MCF 10A (cell line): ENCODE measurements at regions of chr6 and their contacts with region 1.

Region 1: GRCh38 chr6:82040405-82041221 is 206.9 kb downstream of the IBTK start:
- DNase-seq: peak; percentile 71
- H3K4me3 Mint-ChIP-seq: no peak overlapping the region
- H3K27ac Mint-ChIP-seq: no peak overlapping the region
- H3K4me1 Mint-ChIP-seq: no peaks in the 10 kb centered on the region
- H3K27me3 Mint-ChIP-seq: no peaks in the 10 kb centered on the region
- CTCF ChIP-seq: peak; percentile 72

Region 2: GRCh38 chr6:82022601-82023102 is 18.0 kb before region 1 on chr6:
- CTCF ChIA-PET with region 1: interaction called, 21 read pairs
- POLR2A ChIA-PET with region 1: interaction called, 3 read pairs
- intact Hi-C with region 1: no loop called
- DNase-seq: peak; percentile 83
- H3K4me3 Mint-ChIP-seq: no peak overlapping the region
- H3K27ac Mint-ChIP-seq: no peak overlapping the region
- H3K4me1 Mint-ChIP-seq: peaks cover 13% of the 10 kb centered on the region
- H3K27me3 Mint-ChIP-seq: no peaks in the 10 kb centered on the region
- CTCF ChIP-seq: no peak

Region 3: GRCh38 chr6:82196161-82196560 is 155.5 kb after region 1 on chr6:
- CTCF ChIA-PET with region 1: no interaction called
- POLR2A ChIA-PET with region 1: no interaction called
- intact Hi-C with region 1: no loop called
- DNase-seq: no peak
- H3K4me3 Mint-ChIP-seq: no peak overlapping the region
- H3K27ac Mint-ChIP-seq: no peak overlapping the region
- H3K4me1 Mint-ChIP-seq: no peaks in the 10 kb centered on the region
- H3K27me3 Mint-ChIP-seq: no peaks in the 10 kb centered on the region
- CTCF ChIP-seq: no peak

Region 4: GRCh38 chr6:82687855-82688254 is 647.2 kb after region 1 on chr6:
- CTCF ChIA-PET with region 1: no interaction called
- POLR2A ChIA-PET with region 1: no interaction called
- intact Hi-C with region 1: no loop called
- DNase-seq: no peak
- H3K4me3 Mint-ChIP-seq: no peak overlapping the region
- H3K27ac Mint-ChIP-seq: no peak overlapping the region
- H3K4me1 Mint-ChIP-seq: no peaks in the 10 kb centered on the region
- H3K27me3 Mint-ChIP-seq: no peaks in the 10 kb centered on the region
- CTCF ChIP-seq: no peak